Ovary (tissue), 10 donors: ENCODE measurements at regions of chr9 and their contacts with region 1.

Region 1: GRCh38 chr9:83334320-83334719 is 203.9 kb downstream of the FRMD3 start:
- DNase-seq: peak; percentile 45 to 80 (median 77)
- H3K4me3 ChIP-seq: no peak overlapping the region
- H3K27ac ChIP-seq: no peak overlapping the region
- H3K4me1 ChIP-seq: no peaks in the 10 kb centered on the region
- H3K27me3 ChIP-seq: no peaks in the 10 kb centered on the region
- CTCF ChIP-seq: peak; percentile 41 to 73 (median 67)
- EP300 ChIP-seq: no peak
- POLR2A ChIP-seq: no peak

Region 2: DNA sequence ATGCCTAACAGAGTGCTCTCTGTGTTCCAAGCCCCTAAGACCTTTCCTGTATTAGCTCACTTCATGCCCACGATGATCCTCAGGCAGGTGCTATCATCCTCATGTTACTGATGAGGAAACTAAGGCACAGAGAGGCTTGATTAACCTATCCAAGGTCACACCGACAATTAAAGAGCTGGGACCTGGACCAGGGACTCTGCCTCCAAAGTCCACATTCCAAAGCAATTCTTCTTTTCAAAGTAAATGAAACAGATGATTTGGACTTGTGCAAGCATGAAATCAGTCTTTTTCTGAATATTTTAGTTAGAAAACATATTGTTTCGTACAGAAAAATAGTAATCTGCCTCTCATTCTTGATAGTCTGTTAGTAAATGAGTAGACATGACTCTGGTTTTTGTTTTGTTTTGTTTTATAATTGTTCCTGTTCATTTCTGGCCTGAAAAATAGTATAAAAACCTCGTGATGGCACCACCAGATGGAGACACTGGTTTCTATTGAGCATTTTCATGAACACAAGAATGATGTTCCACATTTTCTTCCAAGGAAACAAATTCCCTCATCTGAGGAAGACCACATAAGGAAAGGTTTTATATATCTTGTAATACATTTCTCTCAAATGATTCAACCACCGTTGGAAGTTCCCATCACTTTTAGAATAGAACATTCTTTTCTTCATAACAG is 253.2 kb before region 1 on chr9:
- intact Hi-C with region 1: no loop called
- DNase-seq: no peak
- H3K4me3 ChIP-seq: no peak overlapping the region
- H3K27ac ChIP-seq: no peak overlapping the region
- H3K4me1 ChIP-seq: no peaks in the 10 kb centered on the region
- H3K27me3 ChIP-seq: no peaks in the 10 kb centered on the region
- CTCF ChIP-seq: no peak
- EP300 ChIP-seq: no peak
- POLR2A ChIP-seq: no peak

Region 3: DNA sequence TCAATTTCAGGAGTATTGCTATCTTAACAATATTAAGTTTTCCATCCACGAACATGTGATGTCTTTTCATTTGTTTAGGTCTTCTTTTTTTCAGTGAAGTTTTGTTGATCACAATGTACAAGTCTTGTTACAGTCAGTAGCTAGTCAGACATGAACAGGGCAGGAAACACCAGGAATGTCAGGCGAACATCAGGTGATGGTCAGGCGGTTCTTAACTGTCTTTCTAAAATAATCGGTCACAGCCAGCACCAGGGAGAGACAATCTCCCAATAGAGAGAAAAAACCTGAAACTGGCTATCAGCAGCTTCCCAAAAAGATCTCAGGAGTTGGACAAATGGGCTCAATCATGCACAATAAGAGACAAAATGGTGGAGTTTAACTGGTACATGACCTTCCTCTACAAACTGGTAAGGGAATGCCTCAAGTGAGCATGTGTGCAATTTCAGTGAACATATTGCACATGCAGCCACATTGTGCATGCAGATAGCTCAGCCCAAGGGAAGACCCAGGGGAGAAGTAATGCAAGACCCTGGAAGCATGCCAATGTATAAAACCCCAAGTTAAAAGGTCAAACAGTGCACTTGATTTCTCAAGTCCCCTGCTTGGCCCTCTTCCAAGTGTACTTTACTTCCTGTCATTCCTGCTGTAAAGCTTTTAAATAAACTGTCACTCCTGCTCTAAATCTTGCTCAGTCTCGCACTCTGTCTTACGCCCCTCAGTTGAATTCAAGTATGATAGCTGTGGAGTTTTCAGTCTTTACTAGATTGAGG is 95.3 kb before region 1 on chr9:
- intact Hi-C with region 1: no loop called
- DNase-seq: no peak
- H3K4me3 ChIP-seq: no peak overlapping the region
- H3K27ac ChIP-seq: no peak overlapping the region
- H3K4me1 ChIP-seq: no peaks in the 10 kb centered on the region
- H3K27me3 ChIP-seq: no peaks in the 10 kb centered on the region
- CTCF ChIP-seq: no peak
- EP300 ChIP-seq: no peak
- POLR2A ChIP-seq: no peak

Region 4: GRCh38 chr9:83304686-83305085 is 29.6 kb before region 1 on chr9:
- intact Hi-C with region 1: no loop called
- DNase-seq: peak; percentile 89 to 92 (median 90)
- H3K4me3 ChIP-seq: no peak overlapping the region
- H3K27ac ChIP-seq: peak overlapping the region in 1 of 2 donors; percentile 54
- H3K4me1 ChIP-seq: peaks cover 17% of the 10 kb centered on the region
- H3K27me3 ChIP-seq: no peaks in the 10 kb centered on the region
- CTCF ChIP-seq: no peak
- EP300 ChIP-seq: no peak
- POLR2A ChIP-seq: no peak

Region 5: DNA sequence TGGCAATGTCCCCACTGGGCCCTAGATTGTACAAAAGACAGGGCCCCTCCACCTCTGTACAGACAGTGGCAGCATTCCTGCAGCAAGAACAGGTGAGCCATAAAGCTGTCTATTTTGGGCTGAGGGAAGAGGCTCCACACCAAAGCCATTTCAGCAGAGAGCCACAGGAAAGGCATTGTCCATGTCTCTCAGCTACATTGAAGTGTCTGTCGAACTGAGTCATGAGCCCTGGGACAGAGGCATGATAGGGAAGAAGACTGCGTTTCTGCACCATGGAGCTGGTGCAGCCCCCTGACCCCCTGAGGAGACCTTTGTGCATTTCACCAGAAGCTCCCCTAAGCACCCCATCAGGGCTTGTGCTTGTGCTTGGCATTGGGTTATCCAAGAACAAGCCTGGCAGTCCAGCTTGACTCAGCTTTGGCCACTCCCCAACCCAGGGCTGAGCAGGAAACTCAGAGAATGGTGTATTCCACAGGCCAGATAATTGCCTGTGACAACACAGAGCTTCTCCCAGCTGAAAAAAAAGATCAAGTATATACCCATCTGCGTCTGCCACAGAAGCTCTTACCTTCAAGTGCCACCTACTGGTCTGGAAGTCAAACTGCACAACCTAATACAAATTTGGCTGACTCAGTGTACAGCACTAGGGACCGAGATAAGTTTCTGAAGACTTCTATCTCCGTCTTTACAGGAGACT is 209.8 kb after region 1 on chr9:
- intact Hi-C with region 1: loop called in 2 of 4 experiments (anchors 5 to 10 kb)
- DNase-seq: peak in 1 of 5 donors; percentile 18
- H3K4me3 ChIP-seq: no peak overlapping the region
- H3K27ac ChIP-seq: no peak overlapping the region
- H3K4me1 ChIP-seq: no peaks in the 10 kb centered on the region
- H3K27me3 ChIP-seq: no peaks in the 10 kb centered on the region
- CTCF ChIP-seq: peak in 2 of 3 donors; percentile 18 to 43
- EP300 ChIP-seq: no peak
- POLR2A ChIP-seq: no peak